OCI-LY7 (cell line): ENCODE measurements at regions of chr6 and their contacts with region 1.

Region 1: DNA sequence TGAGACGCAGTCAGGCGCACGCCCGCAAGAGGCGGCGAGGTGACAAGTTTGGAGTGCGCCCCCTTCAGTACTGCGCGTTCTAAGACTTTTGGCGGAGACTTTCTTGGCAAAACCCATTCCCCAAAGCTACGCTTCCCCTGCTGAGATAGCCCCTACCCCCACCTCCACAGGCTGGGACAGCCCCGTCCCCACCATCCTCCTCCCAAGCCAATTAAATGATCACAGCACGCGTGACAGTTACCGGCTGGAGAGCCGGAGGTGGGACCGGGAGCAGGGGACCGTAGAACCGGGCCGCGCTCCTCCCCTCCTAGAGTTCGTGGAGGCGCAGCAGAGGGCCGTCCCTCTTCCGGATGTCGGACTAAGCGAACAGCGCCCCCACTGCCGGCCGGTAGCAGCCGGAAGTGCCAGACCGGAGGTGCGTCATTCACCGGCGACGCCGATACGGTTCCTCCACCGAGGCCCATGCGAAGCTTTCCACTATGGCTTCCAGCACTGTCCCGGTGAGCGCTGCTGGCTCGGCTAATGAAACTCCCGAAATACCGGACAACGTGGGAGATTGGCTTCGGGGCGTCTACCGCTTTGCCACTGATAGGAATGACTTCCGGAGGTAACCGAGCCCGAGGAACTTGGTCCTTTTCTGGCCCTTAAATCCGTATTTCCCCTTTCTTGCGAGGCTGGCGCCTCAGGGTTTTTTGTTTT is at the start of gene TOMM6:
- DNase-seq: peak; percentile 97
- H3K4me3 ChIP-seq: peak within 1 kb of the TSS; percentile 86
- H3K27ac ChIP-seq: peak within 1 kb of the TSS; percentile 81
- H3K4me1 ChIP-seq: peaks cover 39% of the 10 kb centered on the region
- CTCF ChIP-seq: peak; percentile 81
- total RNA-seq, gene TOMM6: 84.9 and 131 TPM in 2 replicates

Region 2: GRCh38 chr6:41767156-41767833 is 20.1 kb before region 1 on chr6:
- CTCF ChIA-PET with region 1: no interaction called
- POLR2A ChIA-PET with region 1: no interaction called
- intact Hi-C with region 1: no loop called
- DNase-seq: peak; percentile 20
- H3K4me3 ChIP-seq: no peak overlapping the region
- H3K27ac ChIP-seq: no peak overlapping the region
- H3K4me1 ChIP-seq: peaks cover 7% of the 10 kb centered on the region
- CTCF ChIP-seq: no peak

Region 3: GRCh38 chr6:42050266-42051032 is 263.1 kb after region 1 on chr6 and contains the start of gene TAF8:
- CTCF ChIA-PET with region 1: no interaction called
- POLR2A ChIA-PET with region 1: interaction called, 11 read pairs
- intact Hi-C with region 1: no loop called
- DNase-seq: peak; percentile 97
- H3K4me3 ChIP-seq: peak within 1 kb of the TSS; percentile 82
- H3K27ac ChIP-seq: peak within 1 kb of the TSS; percentile 74
- H3K4me1 ChIP-seq: peaks cover 47% of the 10 kb centered on the region
- CTCF ChIP-seq: no peak
- total RNA-seq, gene TAF8: 33.2 and 35.1 TPM in 2 replicates